IMR-90 (cell line): ENCODE measurements at regions of chr6 and their contacts with region 1.

Region 1: GRCh38 chr6:52995913-52996645 is 995 bp upstream of the GSTA4 start:
- DNase-seq: peak; percentile 91
- ATAC-seq: no peak
- H3K4me3 ChIP-seq: peak overlapping the region; percentile 4; the same call in 1 of the 2 replicates
- H3K27ac ChIP-seq: no peak overlapping the region
- H3K4me1 ChIP-seq: peaks cover 3% of the 10 kb centered on the region; the same call in 1 of the 2 replicates
- H3K27me3 ChIP-seq: no peaks in the 10 kb centered on the region
- CTCF ChIP-seq: no peak
- POLR2A ChIP-seq: no peak
- RAD21 ChIP-seq: no peak

Region 2: DNA sequence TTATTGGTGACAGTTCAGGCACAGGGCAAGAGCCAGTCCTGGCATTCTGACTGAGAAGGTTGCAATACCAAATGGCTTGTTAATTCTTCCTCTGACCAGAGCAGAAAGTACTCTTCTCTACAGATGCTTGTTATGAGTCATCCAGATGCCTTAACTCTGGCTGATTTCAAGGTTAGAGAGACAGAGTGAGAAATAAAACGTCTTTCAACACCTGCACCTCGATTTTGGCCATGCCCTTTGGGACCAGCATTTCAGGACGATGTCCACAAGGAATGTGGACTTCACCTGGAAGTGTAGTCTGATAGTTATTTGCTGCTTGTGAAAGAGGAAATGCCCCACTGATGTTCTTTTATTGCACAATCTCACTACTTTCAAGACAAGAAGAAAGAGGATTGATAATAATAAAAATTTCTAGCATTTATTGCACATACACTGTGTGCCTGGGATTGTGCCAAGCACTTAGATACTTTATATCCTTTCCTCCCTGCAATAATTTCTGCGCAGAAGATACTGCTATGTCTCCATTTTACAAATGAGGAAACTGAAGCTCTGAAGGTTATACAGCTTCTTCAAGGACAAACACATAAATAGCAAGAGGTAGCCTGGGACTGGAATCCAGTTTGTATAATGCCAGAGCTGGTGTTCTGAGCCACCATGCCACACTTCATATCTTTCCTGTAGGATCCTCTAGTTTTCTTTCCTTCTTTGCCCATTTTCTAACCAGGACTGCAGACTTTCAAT is 678.1 kb before region 1 on chr6:
- CTCF ChIA-PET with region 1: no interaction called
- POLR2A ChIA-PET with region 1: no interaction called
- dilution Hi-C with region 1: no loop called
- in situ Hi-C with region 1: no loop called
- intact Hi-C with region 1: no loop called
- DNase-seq: peak; percentile 61
- ATAC-seq: peak; percentile 80
- H3K4me3 ChIP-seq: no peak overlapping the region
- H3K27ac ChIP-seq: no peak overlapping the region
- H3K4me1 ChIP-seq: peaks cover 2% of the 10 kb centered on the region
- H3K27me3 ChIP-seq: peaks cover 8% of the 10 kb centered on the region
- CTCF ChIP-seq: no peak
- POLR2A ChIP-seq: no peak
- RAD21 ChIP-seq: no peak

Region 3: DNA sequence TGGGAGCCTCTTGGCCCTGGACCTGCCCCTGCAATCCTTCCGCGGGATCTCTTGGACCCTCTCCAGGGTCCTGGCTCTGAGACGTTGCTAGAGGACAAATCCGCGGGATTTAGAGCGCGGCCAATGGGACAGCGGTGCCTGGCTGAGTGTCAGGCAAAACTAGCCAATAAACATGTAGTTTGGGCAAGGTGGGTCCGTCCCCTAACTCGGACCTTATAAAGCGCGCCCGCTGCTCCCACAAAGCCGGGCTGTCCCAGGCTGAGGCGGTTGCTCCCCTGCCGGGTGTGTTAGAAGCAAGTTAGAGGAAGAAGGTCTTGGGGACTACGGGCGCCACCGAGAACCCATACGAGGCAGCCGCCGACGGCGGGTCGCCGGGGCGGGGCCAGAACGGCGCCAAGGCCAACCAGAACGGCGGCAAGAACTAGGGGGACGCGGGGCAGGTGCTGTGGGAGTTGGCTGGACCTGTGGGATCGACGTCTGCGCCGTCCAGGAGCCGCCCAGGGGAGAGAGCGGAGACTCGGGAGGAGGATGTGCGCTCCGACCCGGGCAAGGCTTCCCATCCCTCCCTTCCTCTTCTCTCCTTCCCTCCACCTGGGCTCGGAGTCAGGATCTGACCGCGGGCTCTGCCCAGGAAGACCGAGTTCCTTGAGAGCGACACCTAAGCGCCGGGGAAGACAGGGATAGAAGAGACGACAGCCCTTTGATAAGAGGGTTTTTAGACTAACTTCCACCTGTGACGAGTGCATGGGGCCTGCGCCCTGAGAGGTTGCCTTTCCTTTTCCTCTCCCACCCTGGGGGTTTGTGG is 331.7 kb before region 1 on chr6:
- CTCF ChIA-PET with region 1: no interaction called
- POLR2A ChIA-PET with region 1: no interaction called
- dilution Hi-C with region 1: no loop called
- in situ Hi-C with region 1: no loop called
- intact Hi-C with region 1: loop called (anchors 2 kb)
- DNase-seq: peak; percentile 96
- ATAC-seq: peak; percentile 97
- H3K4me3 ChIP-seq: peak overlapping the region; percentile 81
- H3K27ac ChIP-seq: peak overlapping the region; percentile 56
- H3K4me1 ChIP-seq: peaks cover 4% of the 10 kb centered on the region
- H3K27me3 ChIP-seq: no peaks in the 10 kb centered on the region
- CTCF ChIP-seq: no peak
- POLR2A ChIP-seq: peak; percentile 94
- RAD21 ChIP-seq: no peak

Region 4: DNA sequence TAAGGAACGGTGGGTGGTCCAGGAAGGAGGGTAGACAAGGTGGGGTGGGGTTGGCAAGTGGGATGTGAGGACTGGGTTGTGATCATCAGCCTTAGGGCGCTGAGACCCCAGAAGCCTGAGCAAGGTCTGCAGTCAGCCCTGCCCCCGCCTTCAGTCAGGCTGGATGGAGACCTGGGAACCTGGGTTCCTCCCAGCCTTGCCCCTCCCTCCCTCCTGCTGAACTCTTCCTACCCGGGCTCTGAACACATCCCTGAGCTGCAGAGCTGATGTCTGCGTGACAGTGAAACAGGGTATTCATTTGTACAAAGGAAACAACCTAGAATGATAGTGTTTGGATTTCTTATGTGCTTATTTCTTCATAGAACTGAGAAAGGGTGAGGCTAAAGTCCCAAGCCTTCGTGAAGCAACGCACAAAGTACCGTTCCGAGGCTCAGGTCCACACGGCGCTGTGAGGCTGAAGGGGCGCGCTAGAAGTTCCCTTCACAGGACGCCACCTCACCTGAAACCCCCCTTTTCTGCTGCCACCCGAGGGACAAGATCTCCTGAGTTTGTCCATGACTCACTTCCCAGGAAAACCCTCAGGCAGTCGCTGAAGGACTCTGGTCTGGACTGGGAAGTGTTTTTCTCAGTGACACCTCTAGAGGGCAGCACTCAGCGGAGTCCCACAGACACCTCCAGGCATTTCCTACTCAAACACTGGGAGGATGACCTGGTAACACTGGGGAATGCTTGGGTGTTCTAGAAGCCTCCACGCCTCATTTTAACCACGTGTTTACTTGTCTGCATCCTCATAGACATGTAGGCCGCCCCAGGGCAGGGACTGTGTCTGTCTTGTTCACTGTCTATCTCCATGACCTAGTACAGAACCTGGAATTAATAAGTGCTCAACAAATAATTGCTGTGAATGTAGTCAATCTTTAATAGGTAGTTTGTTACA is 156.7 kb before region 1 on chr6:
- CTCF ChIA-PET with region 1: interaction called, 3 read pairs
- POLR2A ChIA-PET with region 1: no interaction called
- dilution Hi-C with region 1: no loop called
- in situ Hi-C with region 1: no loop called
- intact Hi-C with region 1: loop called (anchors 5 kb)
- DNase-seq: peak; percentile 62
- ATAC-seq: peak; percentile 98
- H3K4me3 ChIP-seq: no peak overlapping the region
- H3K27ac ChIP-seq: no peak overlapping the region
- H3K4me1 ChIP-seq: no peaks in the 10 kb centered on the region
- H3K27me3 ChIP-seq: peaks cover 10% of the 10 kb centered on the region
- CTCF ChIP-seq: peak; percentile 59
- POLR2A ChIP-seq: no peak
- RAD21 ChIP-seq: peak; percentile 59

Region 5: DNA sequence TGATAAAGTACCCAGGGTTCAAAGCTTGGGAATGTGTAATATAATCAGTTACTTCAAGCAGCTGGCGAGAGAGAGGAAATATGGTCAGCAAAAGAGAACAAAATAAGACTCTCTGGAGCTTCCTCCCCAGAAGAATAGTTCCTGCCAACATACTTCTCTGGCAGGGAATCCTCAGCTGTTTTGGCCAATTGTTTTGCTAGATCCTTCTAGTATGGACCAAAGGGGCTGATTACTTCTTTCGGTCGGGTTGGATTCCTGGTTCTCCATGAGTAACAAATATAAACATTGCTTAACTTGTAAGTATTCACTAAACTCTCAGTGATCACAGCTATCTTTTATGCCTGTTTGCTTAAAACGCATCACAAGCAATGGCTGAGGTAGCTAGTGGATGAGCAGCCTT is 37.7 kb after region 1 on chr6:
- CTCF ChIA-PET with region 1: no interaction called
- POLR2A ChIA-PET with region 1: no interaction called
- dilution Hi-C with region 1: no loop called
- in situ Hi-C with region 1: no loop called
- intact Hi-C with region 1: loop called (anchors 1 kb)
- DNase-seq: peak; percentile 88
- ATAC-seq: peak; percentile 73
- H3K4me3 ChIP-seq: no peak overlapping the region
- H3K27ac ChIP-seq: peak overlapping the region; percentile 56; the same call in 1 of the 2 replicates
- H3K4me1 ChIP-seq: peaks cover 18% of the 10 kb centered on the region
- H3K27me3 ChIP-seq: no peaks in the 10 kb centered on the region
- CTCF ChIP-seq: no peak
- POLR2A ChIP-seq: no peak
- RAD21 ChIP-seq: no peak

Region 6: DNA sequence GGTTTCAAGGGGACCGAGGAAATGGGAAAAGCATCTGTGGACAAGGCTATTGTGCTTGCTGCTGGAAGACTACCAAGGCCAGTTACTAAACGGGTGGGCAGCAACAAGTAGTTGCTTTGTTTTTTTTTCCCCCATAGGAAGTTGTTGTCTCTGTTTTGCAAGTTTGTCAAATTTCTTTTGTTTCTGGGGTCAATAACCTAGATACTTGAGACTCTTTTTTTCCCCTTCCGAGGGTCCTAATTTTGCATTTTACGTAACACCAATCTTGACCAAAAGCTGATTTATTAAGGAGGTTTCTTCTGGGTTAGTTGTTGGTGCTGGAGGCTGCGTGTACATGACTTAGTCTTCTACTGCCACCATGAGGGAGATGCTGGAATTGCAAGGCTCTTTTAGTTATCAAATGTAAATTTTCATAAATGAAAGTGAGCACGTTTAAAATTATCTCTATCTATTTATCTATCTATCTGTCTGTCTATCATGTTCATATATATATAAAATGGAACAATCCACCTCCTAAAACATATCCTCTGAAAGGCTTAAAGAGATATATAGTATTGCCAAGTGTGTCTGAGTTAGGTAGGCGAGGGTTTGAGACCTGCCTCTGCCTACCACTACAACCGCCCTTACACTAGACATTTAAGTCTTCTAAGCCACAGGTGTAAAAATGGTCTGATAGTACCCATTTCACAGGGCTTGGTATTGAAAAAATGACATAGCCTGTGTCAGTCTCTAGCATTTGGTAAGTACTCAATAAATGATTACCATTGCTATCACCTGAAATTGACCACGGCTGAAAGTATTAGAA is 488.6 kb after region 1 on chr6:
- CTCF ChIA-PET with region 1: no interaction called
- POLR2A ChIA-PET with region 1: no interaction called
- dilution Hi-C with region 1: no loop called
- in situ Hi-C with region 1: no loop called
- intact Hi-C with region 1: loop called (anchors 5 kb)
- DNase-seq: peak; percentile 75
- ATAC-seq: peak; percentile 88
- H3K4me3 ChIP-seq: no peak overlapping the region
- H3K27ac ChIP-seq: no peak overlapping the region
- H3K4me1 ChIP-seq: no peaks in the 10 kb centered on the region
- H3K27me3 ChIP-seq: peaks cover 17% of the 10 kb centered on the region
- CTCF ChIP-seq: peak; percentile 99
- POLR2A ChIP-seq: no peak
- RAD21 ChIP-seq: peak; percentile 97